ENCODE measurements at regions of chr20 and their contacts with region 1.

Region 1: DNA sequence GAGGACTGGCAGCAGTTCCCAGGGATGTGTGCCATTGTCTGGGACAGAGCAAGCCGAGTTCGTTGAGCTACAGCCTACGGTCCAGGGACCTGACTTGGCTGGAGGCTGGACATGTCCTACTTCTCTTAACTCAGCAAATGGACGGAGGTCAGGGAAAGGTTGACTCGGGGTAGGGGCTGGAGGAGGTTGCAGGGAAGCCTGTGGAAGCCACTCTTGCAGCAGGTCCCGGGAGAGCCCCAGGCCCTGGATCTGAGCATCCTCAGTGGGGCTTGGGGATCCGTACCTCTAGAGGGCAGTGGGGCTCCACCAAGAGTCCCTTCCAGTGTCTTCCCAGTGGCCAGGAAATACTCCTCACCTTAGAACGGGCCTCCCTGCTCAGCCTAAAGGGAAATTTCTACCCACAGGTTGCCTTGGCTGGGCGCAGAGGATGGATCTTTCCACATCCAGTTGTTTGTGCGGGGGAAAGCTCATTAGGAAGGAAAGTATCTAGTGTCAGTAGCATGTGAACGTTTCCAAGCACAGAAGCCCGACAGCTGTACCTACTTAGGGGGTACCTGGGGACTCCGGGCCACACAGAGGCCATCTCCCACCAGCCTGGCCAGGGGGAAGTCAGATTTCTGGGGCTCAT is 170.2 kb downstream of the NFATC2 start:
- DNase-seq: peak; percentile 59 to 74 (median 66)
- ATAC-seq: peak; percentile 82 to 95 (median 90)
- H3K4me3 ChIP-seq: no peak overlapping the region
- H3K27ac ChIP-seq: no peak overlapping the region
- H3K4me1 ChIP-seq: peaks cover 0 to 24% (median 8%) of the 10 kb centered on the region in 12 donors
- H3K27me3 ChIP-seq: no peaks in the 10 kb centered on the region
- CTCF ChIP-seq: peak; percentile 73 to 92 (median 86)
- POLR2A ChIP-seq: no peak

Region 2: DNA sequence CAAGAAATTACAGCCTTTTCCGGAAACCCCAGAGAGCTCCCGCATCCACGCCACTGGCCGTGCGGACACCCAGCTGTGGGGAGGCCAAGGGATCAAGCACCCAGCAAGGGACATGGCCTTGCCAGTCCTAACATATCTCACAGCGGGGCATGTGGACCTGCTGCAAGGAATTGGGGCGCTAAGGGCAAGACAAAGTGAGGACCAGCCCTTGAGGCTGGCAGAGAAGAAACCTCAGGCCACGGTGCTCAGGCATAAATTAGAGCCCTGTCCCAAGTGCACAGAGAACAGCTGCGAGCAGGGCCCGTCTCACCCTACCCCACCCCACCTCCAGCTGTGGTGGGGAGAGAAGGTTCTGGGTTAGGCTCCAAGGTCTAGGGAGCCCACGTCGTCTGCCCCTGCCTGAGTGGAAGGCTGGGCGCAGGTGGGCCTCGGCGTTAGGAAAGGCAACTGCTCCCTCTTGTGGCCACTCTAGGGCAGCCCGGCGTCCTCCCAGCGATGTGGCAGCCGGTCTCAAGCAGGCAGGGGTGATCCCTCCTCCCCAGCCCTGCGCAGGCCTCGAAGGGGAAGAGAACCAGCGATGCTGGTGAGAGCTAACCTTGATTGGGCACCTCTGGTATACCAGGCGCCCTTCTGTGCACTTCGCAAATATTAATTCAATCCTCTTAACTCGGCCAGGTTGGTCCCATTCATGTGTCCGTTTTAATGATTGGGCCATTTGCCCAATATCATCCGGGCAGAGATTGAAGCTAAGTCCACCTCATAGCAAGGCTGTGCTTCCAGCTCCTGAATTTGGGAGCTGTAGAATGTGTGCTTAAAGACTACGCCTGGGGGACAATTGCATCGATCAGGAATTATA is 65.6 kb before region 1 on chr20:
- intact Hi-C with region 1: no loop called
- DNase-seq: peak; percentile 61 to 85 (median 68)
- ATAC-seq: peak; percentile 90 to 97 (median 92)
- H3K4me3 ChIP-seq: no peak overlapping the region
- H3K27ac ChIP-seq: no peak overlapping the region
- H3K4me1 ChIP-seq: peaks cover 0 to 7% (median 0%) of the 10 kb centered on the region in 12 donors
- H3K27me3 ChIP-seq: peaks cover 0 to 15% (median 0%) of the 10 kb centered on the region in 9 donors
- CTCF ChIP-seq: peak; percentile 86 to 96 (median 90)
- POLR2A ChIP-seq: no peak

Region 3: GRCh38 chr20:51434580-51435247 is 62.4 kb after region 1 on chr20:
- intact Hi-C with region 1: no loop called
- DNase-seq: no peak
- ATAC-seq: no peak
- H3K4me3 ChIP-seq: no peak overlapping the region
- H3K27ac ChIP-seq: no peak overlapping the region
- H3K4me1 ChIP-seq: peaks cover 0 to 7% (median 0%) of the 10 kb centered on the region in 12 donors
- H3K27me3 ChIP-seq: no peaks in the 10 kb centered on the region
- CTCF ChIP-seq: no peak
- POLR2A ChIP-seq: no peak

Region 4: GRCh38 chr20:51595058-51595532 is 222.8 kb after region 1 on chr20:
- intact Hi-C with region 1: loop called (anchors 1 to 2 kb)
- DNase-seq: peak; percentile 86 to 92 (median 89)
- ATAC-seq: peak; percentile 96 to 99 (median 97)
- H3K4me3 ChIP-seq: peak overlapping the region in 1 of 12 donors; percentile 17
- H3K27ac ChIP-seq: peak overlapping the region in 2 of 12 donors; percentile 1 to 7
- H3K4me1 ChIP-seq: peaks cover 0 to 14% (median 4%) of the 10 kb centered on the region in 12 donors
- H3K27me3 ChIP-seq: no peaks in the 10 kb centered on the region
- CTCF ChIP-seq: peak; percentile 81 to 92 (median 87)
- POLR2A ChIP-seq: no peak

Region 5: GRCh38 chr20:51624157-51624731 is 252.0 kb after region 1 on chr20:
- intact Hi-C with region 1: loop called in 4 of 10 experiments (anchors 1 to 10 kb)
- DNase-seq: peak in 4 of 5 donors; percentile 29 to 74 (median 46)
- ATAC-seq: peak in 3 of 4 donors; percentile 54 to 57 (median 55)
- H3K4me3 ChIP-seq: no peak overlapping the region
- H3K27ac ChIP-seq: no peak overlapping the region
- H3K4me1 ChIP-seq: peaks cover 0 to 6% (median under 1%) of the 10 kb centered on the region in 12 donors
- H3K27me3 ChIP-seq: no peaks in the 10 kb centered on the region
- CTCF ChIP-seq: peak; percentile 38 to 65 (median 58)
- POLR2A ChIP-seq: no peak

Measured in heart left ventricle (tissue), 16 donors.